WTC11 (cell line): ENCODE measurements at regions of chr1 and their contacts with region 1.

Region 1: DNA sequence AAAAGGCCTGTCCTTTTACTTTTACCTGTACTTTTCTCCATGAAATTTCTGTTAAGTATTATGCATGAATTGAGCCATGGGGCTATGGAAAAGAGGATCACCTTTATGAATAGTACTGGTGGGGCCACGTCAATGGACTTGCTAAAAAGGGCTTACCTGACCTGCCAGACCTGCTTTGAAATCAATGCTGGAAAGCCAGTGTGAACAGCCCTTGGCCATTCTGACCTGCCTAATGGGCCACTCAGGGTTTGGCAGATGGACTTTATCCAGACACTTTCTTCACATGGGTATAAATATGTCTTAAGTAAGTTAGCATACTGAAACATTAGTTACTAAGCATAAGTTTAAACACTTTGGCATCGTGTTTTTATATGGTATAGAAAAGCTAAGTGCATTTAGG is 8.3 kb upstream of the GUK1 start:
- DNase-seq: no peak
- ATAC-seq: no peak
- H3K4me3 Mint-ChIP-seq: no peak overlapping the region
- H3K27ac Mint-ChIP-seq: no peak overlapping the region
- H3K4me1 Mint-ChIP-seq: peaks cover 6% of the 10 kb centered on the region; the same call in 1 of the 2 replicates
- H3K27me3 Mint-ChIP-seq: peaks cover 80% of the 10 kb centered on the region
- CTCF ChIP-seq: no peak

Region 2: GRCh38 chr1:227999056-227999930 is 132.5 kb before region 1 on chr1:
- CTCF ChIA-PET with region 1: interaction called, 24 read pairs
- POLR2A ChIA-PET with region 1: no interaction called
- DNase-seq: peak; percentile 88
- ATAC-seq: peak; percentile 93
- H3K4me3 Mint-ChIP-seq: no peak overlapping the region
- H3K27ac Mint-ChIP-seq: no peak overlapping the region
- H3K4me1 Mint-ChIP-seq: peaks cover 5% of the 10 kb centered on the region; the same call in 1 of the 2 replicates
- H3K27me3 Mint-ChIP-seq: peaks cover 96% of the 10 kb centered on the region
- CTCF ChIP-seq: peak; percentile 74

Region 3: DNA sequence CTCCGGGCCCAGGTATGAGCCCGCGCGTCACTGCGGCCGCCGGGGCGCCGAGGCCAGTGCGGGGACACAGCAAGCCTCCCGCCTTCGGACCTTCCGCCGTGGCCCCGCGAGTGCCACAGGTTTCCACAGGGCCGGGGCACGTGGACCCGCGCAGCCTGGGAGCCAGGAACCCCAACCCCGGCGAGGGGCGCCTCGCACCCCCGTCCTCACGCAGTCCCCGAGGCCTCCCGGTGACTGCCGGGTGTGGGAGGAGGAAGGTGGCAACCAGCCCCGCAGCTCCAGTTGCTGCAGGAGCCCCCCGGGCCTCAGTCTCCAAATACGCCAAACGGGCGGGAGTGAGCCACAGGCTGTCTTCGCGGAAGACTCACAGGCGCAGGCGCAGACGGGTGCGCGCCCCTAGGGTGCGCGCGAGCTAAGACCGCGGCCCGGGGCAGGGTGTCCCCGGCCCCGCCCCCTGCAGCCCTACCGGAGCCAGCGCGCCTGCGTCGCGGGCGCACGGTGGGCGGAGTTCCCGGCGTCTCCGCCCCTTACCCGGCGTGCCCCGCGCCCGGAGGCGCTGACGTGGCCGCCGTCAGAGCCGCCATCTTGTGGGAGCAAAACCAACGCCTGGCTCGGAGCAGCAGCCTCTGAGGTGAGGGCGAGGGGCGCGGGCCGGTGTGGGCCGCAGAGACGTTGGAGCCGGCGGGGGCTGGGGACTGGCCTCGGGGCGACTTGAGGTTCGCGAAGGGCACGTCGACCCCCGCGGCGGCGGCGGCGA is 49.5 kb before region 1 on chr1 and contains the start of gene ARF1:
- CTCF ChIA-PET with region 1: interaction called, 11 read pairs
- POLR2A ChIA-PET with region 1: no interaction called
- DNase-seq: peak; percentile 88
- ATAC-seq: peak; percentile 85
- H3K4me3 Mint-ChIP-seq: peak within 1 kb of the TSS; percentile 95
- H3K27ac Mint-ChIP-seq: peak within 1 kb of the TSS; percentile 94
- H3K4me1 Mint-ChIP-seq: peaks cover 33% of the 10 kb centered on the region
- H3K27me3 Mint-ChIP-seq: peaks cover 36% of the 10 kb centered on the region
- CTCF ChIP-seq: no peak
- total RNA-seq, gene ARF1: 295 to 330 TPM (median 300 TPM) in 3 replicates

Region 4: GRCh38 chr1:228149341-228150119 is 17.8 kb after region 1 on chr1 and contains the start of gene GJC2:
- CTCF ChIA-PET with region 1: interaction called, 11 read pairs
- POLR2A ChIA-PET with region 1: no interaction called
- DNase-seq: peak; percentile 38
- ATAC-seq: peak; percentile 72
- H3K4me3 Mint-ChIP-seq: no peak within 1 kb of the TSS
- H3K27ac Mint-ChIP-seq: no peak within 1 kb of the TSS
- H3K4me1 Mint-ChIP-seq: 0 out of 2 replicates have a peak, but pooled peaks cover 2% of the 10 kb centered on the region
- H3K27me3 Mint-ChIP-seq: no peaks in the 10 kb centered on the region
- CTCF ChIP-seq: no peak
- total RNA-seq, gene GJC2: 0.72 to 1.2 TPM (median 0.87 TPM) in 3 replicates

Region 5: GRCh38 chr1:228174482-228175375 is 43.0 kb after region 1 on chr1:
- CTCF ChIA-PET with region 1: interaction called, 14 read pairs
- POLR2A ChIA-PET with region 1: no interaction called
- DNase-seq: peak; percentile 62
- ATAC-seq: peak; percentile 90
- H3K4me3 Mint-ChIP-seq: peak overlapping the region; percentile 22; the same call in 1 of the 2 replicates
- H3K27ac Mint-ChIP-seq: no peak overlapping the region
- H3K4me1 Mint-ChIP-seq: no peaks in the 10 kb centered on the region
- H3K27me3 Mint-ChIP-seq: no peaks in the 10 kb centered on the region
- CTCF ChIP-seq: no peak

Region 6: DNA sequence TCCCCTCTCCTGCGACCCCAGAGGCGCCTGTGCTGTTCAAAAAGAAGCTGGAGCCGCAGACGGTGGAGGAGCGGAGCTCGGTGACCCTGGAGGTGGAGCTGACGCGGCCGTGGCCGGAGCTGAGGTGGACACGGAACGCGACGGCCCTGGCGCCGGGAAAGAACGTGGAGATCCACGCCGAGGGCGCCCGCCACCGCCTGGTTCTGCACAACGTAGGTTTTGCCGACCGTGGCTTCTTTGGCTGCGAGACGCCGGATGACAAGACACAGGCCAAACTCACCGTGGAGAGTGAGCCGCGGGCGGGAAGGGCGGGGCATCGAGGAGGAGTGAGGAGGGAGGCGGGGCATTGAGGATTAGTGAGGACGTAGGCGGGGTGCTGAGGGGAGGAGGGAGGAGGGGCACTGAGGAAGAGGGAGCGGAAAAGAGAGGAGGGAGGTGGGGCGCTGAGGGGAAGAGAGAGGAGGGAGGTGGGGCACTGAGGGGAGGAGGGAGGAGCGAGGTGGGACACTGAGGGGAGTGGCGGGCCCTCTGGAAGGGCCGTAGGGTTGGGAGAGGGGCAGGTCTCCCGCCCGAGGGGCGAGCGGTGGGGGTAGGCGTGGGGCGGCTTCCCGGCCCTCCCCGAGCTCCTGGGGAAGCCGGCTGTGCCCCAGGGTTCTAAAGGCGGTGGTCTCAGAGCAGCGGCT is 144.1 kb after region 1 on chr1:
- CTCF ChIA-PET with region 1: interaction called, 11 read pairs
- POLR2A ChIA-PET with region 1: no interaction called
- DNase-seq: peak; percentile 90
- ATAC-seq: peak; percentile 85
- H3K4me3 Mint-ChIP-seq: peak overlapping the region; percentile 63
- H3K27ac Mint-ChIP-seq: no peak overlapping the region
- H3K4me1 Mint-ChIP-seq: peaks cover 5% of the 10 kb centered on the region; the same call in 1 of the 2 replicates
- H3K27me3 Mint-ChIP-seq: peaks cover 9% of the 10 kb centered on the region
- CTCF ChIP-seq: no peak